Mammary epithelial cell (primary cell): ENCODE measurements at regions of chr20 and their contacts with region 1.

Region 1: GRCh38 chr20:33731693-33732165 is at the start of gene ZNF341:
- DNase-seq: peak; percentile 72
- H3K4me3 ChIP-seq: peak within 1 kb of the TSS; percentile 51 to 64 (median 51)
- H3K27ac ChIP-seq: no peak within 1 kb of the TSS
- H3K4me1 ChIP-seq: peaks cover 17% of the 10 kb centered on the region
- H3K27me3 ChIP-seq: no peaks in the 10 kb centered on the region
- CTCF ChIP-seq: peak; percentile 51 to 79
- total RNA-seq, gene ZNF341: 1.0 to 4.5 TPM

Region 2: GRCh38 chr20:33450867-33451266 is 280.9 kb before region 1 on chr20:
- CTCF ChIA-PET with region 1: no interaction called
- dilution Hi-C with region 1: no loop called
- in situ Hi-C with region 1: no loop called
- intact Hi-C with region 1: loop called (anchors 2 kb)
- DNase-seq: peak; percentile 19
- H3K4me3 ChIP-seq: no peak overlapping the region
- H3K27ac ChIP-seq: no peak overlapping the region
- H3K4me1 ChIP-seq: no peaks in the 10 kb centered on the region
- H3K27me3 ChIP-seq: no peaks in the 10 kb centered on the region
- CTCF ChIP-seq: no peak

Region 3: DNA sequence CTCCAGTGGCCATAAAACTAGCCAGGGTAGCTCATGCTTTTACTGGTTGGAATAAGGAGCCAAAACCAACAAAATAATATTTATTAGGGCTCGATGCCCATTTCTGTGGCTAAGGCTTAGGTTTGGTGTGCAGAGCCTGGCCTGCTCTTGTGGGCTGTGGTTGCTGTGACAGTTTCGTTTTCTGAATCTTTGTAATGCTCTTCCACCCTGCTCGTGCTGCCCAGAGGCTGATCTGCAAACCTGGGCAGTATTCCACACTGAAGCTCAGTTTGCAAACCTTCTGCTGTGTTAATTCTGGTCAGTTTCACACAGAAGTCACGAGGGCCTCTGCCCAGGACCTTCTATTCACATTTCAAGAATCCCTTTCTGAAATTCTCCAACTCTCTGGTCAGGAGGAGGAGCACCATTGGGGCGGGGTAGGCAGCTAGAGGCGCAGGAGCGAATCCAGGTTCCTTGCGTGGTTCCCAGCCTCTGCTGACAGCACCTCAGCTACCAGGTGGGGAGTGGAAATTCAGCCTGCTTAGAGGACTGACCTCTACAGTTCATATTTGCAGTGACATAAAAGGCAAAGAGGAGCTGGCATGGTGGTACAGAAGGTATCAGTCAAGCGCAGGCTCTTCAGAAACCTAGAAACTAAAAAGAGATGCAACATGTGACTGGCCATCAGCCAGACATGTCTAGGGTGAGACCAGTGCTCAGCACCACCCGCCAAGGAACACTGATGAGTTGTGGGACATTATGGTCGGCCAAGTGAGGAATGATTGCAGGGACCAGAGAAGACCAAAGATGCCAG is 83.9 kb before region 1 on chr20:
- CTCF ChIA-PET with region 1: no interaction called
- dilution Hi-C with region 1: no loop called
- in situ Hi-C with region 1: loop called in 1 of 2 experiments (anchors 25 kb)
- intact Hi-C with region 1: no loop called
- DNase-seq: peak; percentile 66
- H3K4me3 ChIP-seq: no peak overlapping the region
- H3K27ac ChIP-seq: no peak overlapping the region
- H3K4me1 ChIP-seq: peaks cover 11% of the 10 kb centered on the region
- H3K27me3 ChIP-seq: no peaks in the 10 kb centered on the region
- CTCF ChIP-seq: no peak

Region 4: GRCh38 chr20:33674295-33675135 is 57.2 kb before region 1 on chr20 and contains the start of gene NECAB3:
- CTCF ChIA-PET with region 1: no interaction called
- dilution Hi-C with region 1: no loop called
- in situ Hi-C with region 1: no loop called
- intact Hi-C with region 1: loop called (anchors 5 kb)
- DNase-seq: peak; percentile 47
- H3K4me3 ChIP-seq: peak within 1 kb of the TSS; percentile 46 to 59 (median 50)
- H3K27ac ChIP-seq: peak within 1 kb of the TSS; percentile 7
- H3K4me1 ChIP-seq: peaks cover 12% of the 10 kb centered on the region
- H3K27me3 ChIP-seq: no peaks in the 10 kb centered on the region
- CTCF ChIP-seq: no peak
- total RNA-seq, gene NECAB3: 14.6 to 14.7 TPM

Region 5: DNA sequence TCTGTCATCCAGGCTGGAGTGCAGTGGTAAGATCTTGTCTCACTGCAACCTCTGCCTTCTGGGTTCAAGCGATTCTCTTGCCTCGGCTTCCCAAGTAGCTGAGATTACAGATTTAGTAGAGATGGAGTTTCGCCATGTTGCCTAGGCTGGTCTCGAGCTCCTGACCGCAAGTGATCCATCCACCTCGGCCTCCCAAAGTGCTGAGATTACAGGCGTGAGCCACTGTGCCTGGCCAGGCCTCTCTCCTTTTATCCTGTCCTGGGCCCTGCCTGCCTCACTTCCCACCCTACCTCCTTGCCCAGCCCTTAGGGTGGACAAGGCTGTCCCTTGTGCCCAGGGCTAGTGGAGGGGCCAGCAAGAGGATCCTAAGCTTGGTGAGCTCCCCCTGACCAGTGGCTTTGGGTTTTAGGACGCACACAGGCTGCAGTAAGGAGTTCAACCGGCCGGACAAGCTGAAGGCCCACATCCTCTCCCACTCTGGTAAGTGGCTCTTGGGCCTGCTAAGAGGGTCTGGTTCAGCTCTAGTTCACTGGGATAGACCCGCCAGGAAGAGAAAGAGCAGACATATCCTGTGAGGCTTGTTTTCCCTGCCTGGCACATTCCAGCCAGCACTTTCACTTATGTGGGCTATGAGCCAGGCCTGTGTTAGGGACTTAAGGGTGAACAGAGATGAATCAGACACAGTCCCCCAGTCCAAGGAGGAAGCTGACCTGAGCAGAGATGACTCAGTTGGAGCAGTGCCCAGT is 57.6 kb after region 1 on chr20:
- CTCF ChIA-PET with region 1: no interaction called
- dilution Hi-C with region 1: no loop called
- in situ Hi-C with region 1: no loop called
- intact Hi-C with region 1: loop called (anchors 5 kb)
- DNase-seq: peak; percentile 98
- H3K4me3 ChIP-seq: no peak overlapping the region
- H3K27ac ChIP-seq: no peak overlapping the region
- H3K4me1 ChIP-seq: peaks cover 27% of the 10 kb centered on the region
- H3K27me3 ChIP-seq: no peaks in the 10 kb centered on the region
- CTCF ChIP-seq: no peak

Region 6: GRCh38 chr20:33810885-33811777 is 79.4 kb after region 1 on chr20 and contains the start of gene CHMP4B:
- CTCF ChIA-PET with region 1: no interaction called
- dilution Hi-C with region 1: no loop called
- in situ Hi-C with region 1: no loop called
- intact Hi-C with region 1: loop called (anchors 2 kb)
- DNase-seq: peak; percentile 98
- H3K4me3 ChIP-seq: peak within 1 kb of the TSS; percentile 72 to 86 (median 81)
- H3K27ac ChIP-seq: peak within 1 kb of the TSS; percentile 97
- H3K4me1 ChIP-seq: peaks cover 8% of the 10 kb centered on the region
- H3K27me3 ChIP-seq: no peaks in the 10 kb centered on the region
- CTCF ChIP-seq: no peak
- total RNA-seq, gene CHMP4B: 24.2 to 72.4 TPM

Region 7: GRCh38 chr20:34129518-34130162 is 397.9 kb after region 1 on chr20:
- CTCF ChIA-PET with region 1: no interaction called
- dilution Hi-C with region 1: no loop called
- in situ Hi-C with region 1: no loop called
- intact Hi-C with region 1: loop called (anchors 1 kb)
- DNase-seq: peak; percentile 64
- H3K4me3 ChIP-seq: no peak overlapping the region
- H3K27ac ChIP-seq: no peak overlapping the region
- H3K4me1 ChIP-seq: peaks cover under 1% of the 10 kb centered on the region
- H3K27me3 ChIP-seq: no peaks in the 10 kb centered on the region
- CTCF ChIP-seq: peak; percentile 83 to 85